Panc1 (cell line): ENCODE measurements at regions of chr10 and their contacts with region 1.

Region 1: GRCh38 chr10:13787015-13787421 is 200.3 kb downstream of the PRPF18 start:
- DNase-seq: no peak
- ATAC-seq: no peak
- H3K4me3 ChIP-seq: no peak overlapping the region
- H3K27ac ChIP-seq: no peak overlapping the region
- H3K4me1 ChIP-seq: no peaks in the 10 kb centered on the region
- H3K27me3 ChIP-seq: no peaks in the 10 kb centered on the region
- CTCF ChIP-seq: no peak

Region 2: DNA sequence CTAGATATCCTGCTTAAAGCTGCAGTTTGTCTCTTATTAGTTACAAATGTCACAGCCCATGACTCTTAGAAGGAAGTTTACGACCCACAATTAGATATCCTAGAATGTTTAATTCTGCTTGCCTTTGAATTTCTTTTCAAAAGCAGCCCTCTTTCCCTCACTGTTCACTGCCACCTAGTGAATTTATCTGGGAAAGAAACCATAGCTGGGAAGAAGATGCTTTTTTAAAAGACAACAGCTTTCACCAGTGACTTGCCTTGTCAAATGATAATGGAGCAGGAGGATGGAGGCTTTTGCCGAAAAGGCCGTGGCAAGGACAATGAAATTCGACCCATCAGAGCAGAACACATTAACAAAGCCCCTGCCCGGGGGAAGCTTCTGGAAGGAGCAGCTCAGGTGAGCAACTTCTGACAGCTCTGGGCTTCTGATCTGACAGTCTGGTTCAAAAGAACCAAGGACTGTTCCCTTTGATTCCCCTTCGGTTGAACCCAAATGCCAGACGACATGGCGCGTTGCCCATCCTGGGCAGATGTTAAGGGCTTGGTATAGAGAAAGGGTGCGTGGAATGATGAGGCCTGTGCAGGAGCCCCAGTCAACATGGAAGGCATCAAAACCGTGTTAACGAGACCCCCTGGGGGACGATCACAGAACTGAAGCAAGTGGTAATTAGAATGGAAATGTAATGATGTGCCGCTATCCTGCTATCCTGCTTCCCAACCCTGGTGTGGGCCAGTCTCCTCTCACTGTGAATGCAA is 306.9 kb after region 1 on chr10:
- CTCF ChIA-PET with region 1: interaction called, 4 read pairs
- POLR2A ChIA-PET with region 1: no interaction called
- in situ Hi-C with region 1: no loop called
- intact Hi-C with region 1: loop called (anchors 10 kb)
- DNase-seq: peak; percentile 15
- ATAC-seq: no peak
- H3K4me3 ChIP-seq: no peak overlapping the region
- H3K27ac ChIP-seq: no peak overlapping the region
- H3K4me1 ChIP-seq: no peaks in the 10 kb centered on the region
- H3K27me3 ChIP-seq: no peaks in the 10 kb centered on the region
- CTCF ChIP-seq: no peak; the same call in 1 of the 2 replicates

Region 3: GRCh38 chr10:14329746-14330173 is 542.7 kb after region 1 on chr10:
- CTCF ChIA-PET with region 1: no interaction called
- POLR2A ChIA-PET with region 1: no interaction called
- in situ Hi-C with region 1: no loop called
- intact Hi-C with region 1: no loop called
- DNase-seq: no peak
- ATAC-seq: no peak
- H3K4me3 ChIP-seq: no peak overlapping the region
- H3K27ac ChIP-seq: no peak overlapping the region
- H3K4me1 ChIP-seq: no peaks in the 10 kb centered on the region
- H3K27me3 ChIP-seq: no peaks in the 10 kb centered on the region
- CTCF ChIP-seq: no peak